Activated T-helper 1 cell treated with anti-CD3 and anti-CD28 coated beads, Interleukin-12 subunit alpha, Interleukin-12 subunit beta, Interleukin-2, Interleukin-4 antibody, amounts not matched to agents 30 ng/mL and 10 ng/mL and 1 ng/mL, durations not matched to agents 14 hours and 24 hours and 36 hours (primary cell): ENCODE measurements at regions of chr7 and their contacts with region 1.

Region 1: GRCh38 chr7:37448636-37449361 is at the start of gene ELMO1:
- DNase-seq: peak; percentile 75
- H3K4me3 Mint-ChIP-seq: peak within 1 kb of the TSS; percentile 93
- H3K27ac Mint-ChIP-seq: peak within 1 kb of the TSS; percentile 97
- H3K4me1 Mint-ChIP-seq: peaks cover 55% of the 10 kb centered on the region
- H3K27me3 Mint-ChIP-seq: peaks cover 7% of the 10 kb centered on the region
- total RNA-seq, gene ELMO1: 113 and 119 TPM in 2 replicates

Region 2: GRCh38 chr7:35816514-35816913 is 1632.3 kb before region 1 on chr7:
- intact Hi-C with region 1: loop called (anchors 10 kb)
- DNase-seq: no peak
- H3K4me3 Mint-ChIP-seq: no peak overlapping the region
- H3K27ac Mint-ChIP-seq: no peak overlapping the region
- H3K4me1 Mint-ChIP-seq: peaks cover 61% of the 10 kb centered on the region
- H3K27me3 Mint-ChIP-seq: no peaks in the 10 kb centered on the region

Region 3: GRCh38 chr7:36962367-36962766 is 486.4 kb before region 1 on chr7:
- intact Hi-C with region 1: loop called (anchors 5 kb)
- DNase-seq: no peak
- H3K4me3 Mint-ChIP-seq: no peak overlapping the region
- H3K27ac Mint-ChIP-seq: peak overlapping the region; percentile 55
- H3K4me1 Mint-ChIP-seq: peaks cover 44% of the 10 kb centered on the region
- H3K27me3 Mint-ChIP-seq: no peaks in the 10 kb centered on the region

Region 4: GRCh38 chr7:37234928-37235327 is 213.9 kb before region 1 on chr7:
- intact Hi-C with region 1: loop called (anchors 2 kb)
- DNase-seq: no peak
- H3K4me3 Mint-ChIP-seq: no peak overlapping the region
- H3K27ac Mint-ChIP-seq: no peak overlapping the region
- H3K4me1 Mint-ChIP-seq: peaks cover 11% of the 10 kb centered on the region
- H3K27me3 Mint-ChIP-seq: no peaks in the 10 kb centered on the region

Region 5: DNA sequence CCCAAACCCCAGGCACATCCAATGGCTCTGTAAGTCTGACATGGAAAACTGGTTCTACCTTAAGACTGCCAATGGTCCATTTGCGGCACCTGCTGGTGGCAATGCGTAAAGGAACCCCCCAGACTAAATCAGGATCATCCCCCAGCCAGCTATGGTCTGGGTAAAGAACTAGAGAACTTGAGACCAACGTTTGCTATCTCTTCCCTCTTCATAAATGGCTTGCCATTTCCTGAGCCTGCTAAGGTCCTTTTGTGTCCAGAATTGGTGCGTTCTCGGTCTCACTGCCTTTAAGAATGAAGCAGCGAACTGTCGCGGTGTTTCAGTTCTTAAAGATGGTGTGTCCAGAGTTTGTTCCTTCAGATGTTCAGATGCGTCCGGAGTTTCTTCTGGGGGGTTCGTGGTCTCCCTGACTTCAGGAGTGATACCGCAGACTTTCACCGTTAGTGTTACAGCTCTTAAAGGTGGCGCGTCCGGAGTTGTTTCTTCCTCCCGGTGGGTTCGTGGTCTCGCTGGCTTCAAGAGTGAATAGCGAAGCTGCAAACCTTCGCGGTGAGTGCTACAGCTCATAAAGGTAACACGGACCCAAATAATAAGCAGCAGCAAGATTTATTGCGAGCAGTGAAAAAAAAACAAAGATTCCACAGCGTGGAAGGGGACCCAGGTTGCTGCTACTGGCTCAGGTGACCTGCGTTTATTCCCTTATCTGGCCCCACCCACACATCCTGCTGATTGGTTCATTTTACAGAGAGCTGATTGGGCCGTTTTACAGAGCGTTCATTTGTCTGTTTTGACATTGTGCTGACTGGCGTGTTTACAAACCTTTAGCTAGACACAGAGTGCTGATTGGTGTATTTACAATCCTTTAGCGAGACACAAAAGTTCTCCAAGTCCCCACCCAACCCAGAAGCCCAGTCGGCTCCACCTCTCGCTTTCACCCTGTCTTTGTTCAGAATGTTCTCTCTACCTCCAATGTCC is 95.5 kb before region 1 on chr7:
- intact Hi-C with region 1: loop called (anchors 1 kb)
- DNase-seq: peak; percentile 71
- H3K4me3 Mint-ChIP-seq: peak overlapping the region; percentile 93
- H3K27ac Mint-ChIP-seq: peak overlapping the region; percentile 97
- H3K4me1 Mint-ChIP-seq: peaks cover 90% of the 10 kb centered on the region
- H3K27me3 Mint-ChIP-seq: no peaks in the 10 kb centered on the region

Region 6: GRCh38 chr7:37476881-37477450 is 28.2 kb after region 1 on chr7:
- intact Hi-C with region 1: no loop called
- DNase-seq: no peak
- H3K4me3 Mint-ChIP-seq: no peak overlapping the region
- H3K27ac Mint-ChIP-seq: no peak overlapping the region
- H3K4me1 Mint-ChIP-seq: no peaks in the 10 kb centered on the region
- H3K27me3 Mint-ChIP-seq: peaks cover 32% of the 10 kb centered on the region

Region 7: DNA sequence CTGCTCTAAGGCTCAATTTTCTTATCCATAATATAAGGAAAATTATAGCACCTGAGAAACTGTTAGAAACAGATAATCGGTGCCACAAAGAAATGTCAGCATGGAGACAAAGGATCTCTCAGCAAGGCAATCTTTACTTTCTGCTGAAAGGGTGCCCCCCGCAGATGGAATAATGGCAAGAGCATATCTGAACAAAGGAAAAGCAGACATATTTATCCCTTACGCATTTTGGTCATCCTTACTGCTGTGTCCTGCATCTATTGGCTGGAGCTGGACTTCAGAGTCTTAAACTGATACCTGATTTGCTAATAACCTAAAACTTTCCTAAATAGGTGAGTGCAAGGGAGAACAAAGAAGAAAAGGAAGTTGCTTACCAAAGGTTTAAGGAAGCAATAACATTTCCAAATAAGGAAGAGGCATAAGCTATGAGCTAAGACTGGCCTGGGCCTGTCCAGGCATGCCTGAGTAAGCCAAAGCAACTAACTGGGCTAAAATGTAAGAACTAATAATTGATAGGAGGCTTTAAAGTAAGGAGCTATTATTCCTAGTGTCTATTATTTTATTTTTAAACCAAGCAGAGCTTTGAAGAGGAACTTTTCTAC is 39.5 kb after region 1 on chr7:
- intact Hi-C with region 1: loop called (anchors 1 kb)
- DNase-seq: no peak
- H3K4me3 Mint-ChIP-seq: no peak overlapping the region
- H3K27ac Mint-ChIP-seq: no peak overlapping the region
- H3K4me1 Mint-ChIP-seq: peaks cover 4% of the 10 kb centered on the region
- H3K27me3 Mint-ChIP-seq: peaks cover 2% of the 10 kb centered on the region